Adrenal gland (tissue), 19 donors: ENCODE measurements at regions of chr10 and their contacts with region 1.

Region 1: DNA sequence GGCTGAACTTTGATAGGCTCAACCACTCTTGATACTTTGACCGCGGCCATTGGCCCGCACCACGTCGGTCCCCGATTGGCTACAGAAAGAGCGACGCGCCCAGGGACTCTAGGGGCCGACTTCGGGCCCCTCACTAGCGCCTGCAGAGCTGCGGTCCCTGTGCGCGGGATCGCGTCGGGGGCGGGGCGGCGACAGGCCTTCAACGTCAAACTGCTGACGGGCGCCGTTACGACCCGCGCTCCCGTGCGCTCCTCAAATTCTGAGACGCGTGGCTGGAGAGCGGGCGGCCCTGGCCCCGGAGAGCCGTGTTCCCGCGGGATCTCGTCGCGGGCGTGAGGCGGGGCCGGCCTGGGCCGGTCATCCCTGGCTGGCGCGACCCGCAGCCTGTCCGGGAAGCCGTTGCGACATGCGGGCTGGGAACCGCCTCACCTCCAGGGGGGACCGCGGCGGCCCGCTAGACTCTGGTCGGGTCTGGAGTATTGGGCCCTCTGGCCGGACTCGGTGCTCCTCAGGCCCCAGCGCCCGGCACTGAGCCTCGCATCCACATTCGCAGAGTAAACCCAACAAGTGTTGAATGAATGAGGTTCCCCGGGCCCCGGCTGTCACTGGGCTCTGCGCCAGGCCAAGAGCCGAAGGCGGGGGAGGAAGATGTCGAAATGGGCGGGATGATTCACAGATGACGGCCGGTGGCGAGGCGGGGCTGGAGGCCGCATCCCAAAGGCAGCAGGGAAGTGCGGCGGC is 644 bp upstream of the SLC25A28 start:
- DNase-seq: peak; percentile 95 to 98 (median 97)
- H3K4me3 ChIP-seq: peak overlapping the region; percentile 5 to 75 (median 40)
- H3K27ac ChIP-seq: peak overlapping the region; percentile 97 to 100 (median 99)
- H3K4me1 ChIP-seq: peaks cover 29 to 37% of the 10 kb centered on the region in 2 donors
- H3K27me3 ChIP-seq: no peaks in the 10 kb centered on the region
- CTCF ChIP-seq: peak in 3 of 6 experiments; percentile 18 to 29 (median 23)
- POLR2A ChIP-seq: peak; percentile 31 to 62

Region 2: GRCh38 chr10:99395750-99396445 is 225.0 kb before region 1 on chr10:
- intact Hi-C with region 1: loop called in 1 of 2 experiments (anchors 10 kb)
- DNase-seq: no peak
- H3K4me3 ChIP-seq: no peak overlapping the region
- H3K27ac ChIP-seq: no peak overlapping the region
- H3K4me1 ChIP-seq: no peaks in the 10 kb centered on the region
- H3K27me3 ChIP-seq: no peaks in the 10 kb centered on the region
- CTCF ChIP-seq: no peak
- POLR2A ChIP-seq: no peak

Region 3: GRCh38 chr10:99430451-99431189 is 190.3 kb before region 1 on chr10 and contains the start of gene GOT1:
- intact Hi-C with region 1: loop called in 1 of 2 experiments (anchors 10 kb)
- DNase-seq: peak; percentile 94 to 99 (median 97)
- H3K4me3 ChIP-seq: peak within 1 kb of the TSS; percentile 31 to 86 (median 65)
- H3K27ac ChIP-seq: peak within 1 kb of the TSS; percentile 82 to 98 (median 92)
- H3K4me1 ChIP-seq: peaks cover 20 to 40% of the 10 kb centered on the region in 2 donors
- H3K27me3 ChIP-seq: no peaks in the 10 kb centered on the region
- CTCF ChIP-seq: no peak
- POLR2A ChIP-seq: peak; percentile 73 to 75
- total RNA-seq, gene GOT1: 19.6 to 98.6 (median 31.9) TPM

Region 4: GRCh38 chr10:99661370-99661749 is 40.5 kb after region 1 on chr10:
- intact Hi-C with region 1: loop called in 1 of 2 experiments (anchors 5 kb)
- DNase-seq: peak in 5 of 7 donors; percentile 39 to 56 (median 49)
- H3K4me3 ChIP-seq: peak overlapping the region in 1 of 4 donors; percentile 3
- H3K27ac ChIP-seq: peak overlapping the region in 3 of 5 donors; percentile 35 to 50 (median 43)
- H3K4me1 ChIP-seq: peaks cover 16 to 26% of the 10 kb centered on the region in 2 donors
- H3K27me3 ChIP-seq: no peaks in the 10 kb centered on the region
- CTCF ChIP-seq: no peak
- POLR2A ChIP-seq: peak in 1 of 2 donors; percentile 69

Region 5: DNA sequence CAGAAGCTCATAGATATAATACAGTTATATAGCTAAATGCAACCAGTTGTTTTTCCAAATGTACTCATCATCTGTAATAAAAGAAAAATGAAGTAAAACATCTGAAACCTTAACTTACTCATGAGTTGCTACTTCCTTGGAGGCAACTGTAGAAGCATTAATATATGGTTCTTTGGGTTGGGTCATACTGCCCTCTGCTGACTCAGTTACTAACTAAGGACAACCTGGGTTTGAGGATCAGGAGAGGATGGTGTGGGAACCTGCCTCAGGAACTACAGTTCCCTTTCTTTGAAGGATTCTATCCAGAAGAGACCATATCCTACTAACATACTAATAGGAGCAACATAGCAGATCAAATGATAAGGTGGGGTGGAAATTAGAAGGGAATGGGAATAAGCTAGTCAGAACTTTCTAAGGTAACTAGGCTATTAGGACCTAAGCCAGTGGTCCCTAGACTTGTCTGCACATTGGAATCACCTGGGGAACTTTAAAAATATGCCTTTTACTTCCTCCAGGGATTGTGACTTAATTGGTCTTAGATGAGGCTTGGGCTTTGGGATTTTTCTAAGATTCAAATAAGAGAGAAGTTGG is 90.3 kb after region 1 on chr10:
- intact Hi-C with region 1: loop called (anchors 10 kb)
- DNase-seq: peak in 4 of 7 donors; percentile 16 to 54 (median 45)
- H3K4me3 ChIP-seq: no peak overlapping the region
- H3K27ac ChIP-seq: no peak overlapping the region
- H3K4me1 ChIP-seq: peaks cover 12 to 32% of the 10 kb centered on the region in 2 donors
- H3K27me3 ChIP-seq: no peaks in the 10 kb centered on the region
- CTCF ChIP-seq: peak in 5 of 6 experiments; percentile 36 to 59 (median 51)
- POLR2A ChIP-seq: no peak

Region 6: GRCh38 chr10:100038561-100039071 is 417.7 kb after region 1 on chr10:
- intact Hi-C with region 1: no loop called
- DNase-seq: no peak
- H3K4me3 ChIP-seq: no peak overlapping the region
- H3K27ac ChIP-seq: no peak overlapping the region
- H3K4me1 ChIP-seq: peaks cover 0 to 5% of the 10 kb centered on the region in 2 donors
- H3K27me3 ChIP-seq: no peaks in the 10 kb centered on the region
- CTCF ChIP-seq: no peak
- POLR2A ChIP-seq: no peak